ENCODE measurements at regions of chr16 and their contacts with region 1.

Region 1: GRCh38 chr16:85717393-85718121 is 28.8 kb upstream of the GINS2 start:
- DNase-seq: peak; percentile 59
- H3K4me3 Mint-ChIP-seq: no peak overlapping the region
- H3K27ac Mint-ChIP-seq: no peak overlapping the region
- H3K4me1 Mint-ChIP-seq: peaks cover 7% of the 10 kb centered on the region
- H3K27me3 Mint-ChIP-seq: no peaks in the 10 kb centered on the region
- CTCF ChIP-seq: peak; percentile 50

Region 2: DNA sequence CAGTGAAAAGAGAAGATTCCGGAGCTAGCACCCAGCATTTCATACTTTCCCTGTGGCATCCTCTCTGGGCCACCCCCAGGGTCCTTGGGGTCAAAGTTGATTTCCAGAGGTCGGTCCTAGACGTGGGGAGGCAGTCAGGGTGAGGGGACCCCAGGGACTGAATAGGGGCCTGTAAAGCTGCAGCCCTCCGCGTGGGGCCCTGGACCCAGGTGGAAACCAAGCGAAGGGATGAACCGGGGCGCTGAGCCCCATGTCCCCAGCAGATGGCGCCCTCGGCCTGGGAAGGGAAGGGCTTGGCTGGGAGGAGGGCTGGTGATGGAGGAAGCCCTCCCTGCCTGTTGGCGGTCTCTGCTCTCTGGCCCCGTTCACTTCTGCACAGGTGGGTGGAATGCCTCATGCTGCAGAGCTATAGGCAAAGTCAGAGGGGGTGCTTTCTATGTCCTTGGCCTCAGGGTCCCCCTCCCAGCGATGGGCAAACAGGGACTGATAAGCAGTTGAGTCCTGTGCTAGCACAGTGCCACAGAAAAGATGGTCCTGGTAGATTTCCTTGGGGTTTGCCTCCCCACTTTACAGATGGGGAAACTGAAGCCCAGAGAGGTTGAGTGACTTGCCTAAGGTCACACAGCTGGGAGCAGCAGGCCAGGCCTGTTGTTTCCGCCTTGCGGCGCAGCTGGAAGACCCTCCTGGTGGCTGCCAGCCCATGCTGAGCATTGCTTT is 441.9 kb before region 1 on chr16:
- CTCF ChIA-PET with region 1: interaction called, 8 read pairs
- POLR2A ChIA-PET with region 1: no interaction called
- intact Hi-C with region 1: loop called (anchors 5 kb)
- DNase-seq: peak; percentile 70
- H3K4me3 Mint-ChIP-seq: no peak overlapping the region
- H3K27ac Mint-ChIP-seq: no peak overlapping the region
- H3K4me1 Mint-ChIP-seq: no peaks in the 10 kb centered on the region
- H3K27me3 Mint-ChIP-seq: no peaks in the 10 kb centered on the region
- CTCF ChIP-seq: peak; percentile 89

Region 3: DNA sequence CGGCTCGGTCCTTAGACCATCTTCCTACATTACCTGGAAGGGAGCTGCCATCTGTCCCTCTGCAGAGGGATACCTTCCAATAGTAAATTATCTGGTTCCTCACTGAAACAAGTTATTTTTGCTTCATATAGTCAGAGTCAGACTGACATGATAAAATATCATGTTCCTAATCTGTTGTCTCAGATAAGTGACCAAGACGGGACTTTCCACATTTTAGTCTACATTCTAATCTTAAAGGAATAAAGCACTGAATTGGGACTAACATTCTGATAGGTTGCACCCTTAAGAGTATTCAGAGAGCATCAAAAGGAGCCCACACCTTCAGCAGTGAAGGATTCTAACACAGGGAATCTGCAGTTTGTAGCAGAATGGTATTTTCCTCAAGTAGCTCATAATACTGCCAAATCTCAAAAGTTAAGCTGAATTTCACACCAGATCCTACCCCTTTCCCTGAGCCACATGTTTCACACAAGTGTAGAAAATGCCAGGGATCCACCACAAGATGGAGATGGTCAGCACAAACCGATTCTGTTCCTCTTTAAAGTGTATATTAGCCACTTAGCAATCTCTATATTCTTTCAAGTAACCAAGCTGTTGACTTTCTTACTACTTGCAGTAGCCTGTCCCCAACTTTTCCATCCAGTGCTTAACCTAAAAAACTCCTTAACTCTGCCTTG is 42.2 kb before region 1 on chr16:
- CTCF ChIA-PET with region 1: interaction called, 12 read pairs
- POLR2A ChIA-PET with region 1: no interaction called
- intact Hi-C with region 1: loop called (anchors 1 kb)
- DNase-seq: peak; percentile 32
- H3K4me3 Mint-ChIP-seq: no peak overlapping the region
- H3K27ac Mint-ChIP-seq: no peak overlapping the region
- H3K4me1 Mint-ChIP-seq: no peaks in the 10 kb centered on the region
- H3K27me3 Mint-ChIP-seq: no peaks in the 10 kb centered on the region
- CTCF ChIP-seq: peak; percentile 43

Region 4: GRCh38 chr16:85704900-85705846 is 12.4 kb before region 1 on chr16:
- CTCF ChIA-PET with region 1: interaction called, 10 read pairs
- POLR2A ChIA-PET with region 1: interaction called, 3 read pairs
- intact Hi-C with region 1: no loop called
- DNase-seq: no peak
- H3K4me3 Mint-ChIP-seq: no peak overlapping the region
- H3K27ac Mint-ChIP-seq: no peak overlapping the region
- H3K4me1 Mint-ChIP-seq: no peaks in the 10 kb centered on the region
- H3K27me3 Mint-ChIP-seq: no peaks in the 10 kb centered on the region
- CTCF ChIP-seq: no peak

Region 5: DNA sequence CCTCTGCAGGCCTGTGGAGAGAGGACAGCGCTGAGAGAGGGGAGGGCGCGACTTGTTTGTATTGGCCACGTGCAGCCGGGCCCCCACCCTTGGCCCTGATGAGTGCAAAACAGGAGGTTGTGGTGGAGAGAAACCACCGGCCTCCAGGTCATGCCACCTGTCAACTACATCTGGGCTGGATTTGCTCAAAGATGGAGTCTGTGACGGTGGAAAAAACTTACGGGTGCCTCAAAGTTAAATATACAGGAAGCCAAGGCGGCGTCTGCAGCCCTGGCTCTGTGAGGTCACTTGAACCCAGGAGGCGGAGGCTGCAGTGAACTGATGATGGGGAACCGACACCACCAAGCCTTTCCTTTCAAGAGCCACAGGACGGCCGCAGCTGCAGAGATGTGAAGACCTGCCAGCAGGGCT is 17.7 kb after region 1 on chr16:
- CTCF ChIA-PET with region 1: interaction called, 12 read pairs
- POLR2A ChIA-PET with region 1: interaction called, 3 read pairs
- intact Hi-C with region 1: no loop called
- DNase-seq: no peak
- H3K4me3 Mint-ChIP-seq: no peak overlapping the region
- H3K27ac Mint-ChIP-seq: no peak overlapping the region
- H3K4me1 Mint-ChIP-seq: peaks cover 6% of the 10 kb centered on the region
- H3K27me3 Mint-ChIP-seq: no peaks in the 10 kb centered on the region
- CTCF ChIP-seq: no peak

Region 6: DNA sequence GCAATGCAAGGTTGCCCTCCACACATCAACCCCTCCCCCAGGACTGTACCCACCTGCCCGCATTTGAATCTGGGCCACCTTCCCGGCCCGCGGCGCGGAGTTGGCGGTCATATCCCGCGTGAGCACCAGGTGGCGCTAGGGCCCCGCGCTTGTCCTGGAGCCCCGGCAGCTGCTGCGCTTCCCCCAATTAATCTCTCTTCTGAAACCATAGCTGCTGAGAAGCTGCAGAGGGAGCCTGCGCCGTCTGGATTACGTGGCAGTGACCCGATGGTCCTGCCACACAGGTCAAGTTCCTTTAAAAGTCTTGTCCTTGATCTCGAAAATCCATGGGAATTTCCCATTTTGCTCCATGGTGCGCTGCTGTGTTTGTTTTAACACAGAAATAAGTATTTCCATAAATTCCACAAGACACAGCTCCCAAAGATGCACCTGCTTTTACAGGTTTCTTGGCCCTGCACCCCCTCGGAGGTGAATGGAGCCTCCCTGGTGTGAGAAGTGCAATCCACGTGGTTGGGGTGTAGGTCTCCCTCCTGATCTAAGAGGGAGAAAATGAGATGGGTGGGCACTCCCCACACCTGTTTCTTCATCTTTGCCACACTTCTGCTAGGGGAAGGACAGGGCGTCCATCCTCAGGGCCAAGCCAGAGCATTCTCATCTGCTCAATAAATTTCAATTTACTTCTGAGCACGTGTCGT is 104.0 kb after region 1 on chr16:
- CTCF ChIA-PET with region 1: no interaction called
- POLR2A ChIA-PET with region 1: no interaction called
- intact Hi-C with region 1: no loop called
- DNase-seq: peak; percentile 68
- H3K4me3 Mint-ChIP-seq: no peak overlapping the region
- H3K27ac Mint-ChIP-seq: no peak overlapping the region
- H3K4me1 Mint-ChIP-seq: peaks cover 6% of the 10 kb centered on the region
- H3K27me3 Mint-ChIP-seq: peaks cover 27% of the 10 kb centered on the region
- CTCF ChIP-seq: peak; percentile 96

Region 7: GRCh38 chr16:85923153-85924021 is 205.8 kb after region 1 on chr16:
- CTCF ChIA-PET with region 1: no interaction called
- POLR2A ChIA-PET with region 1: no interaction called
- intact Hi-C with region 1: no loop called
- DNase-seq: no peak
- H3K4me3 Mint-ChIP-seq: no peak overlapping the region
- H3K27ac Mint-ChIP-seq: no peak overlapping the region
- H3K4me1 Mint-ChIP-seq: no peaks in the 10 kb centered on the region
- H3K27me3 Mint-ChIP-seq: peaks cover 41% of the 10 kb centered on the region
- CTCF ChIP-seq: no peak